ENCODE measurements at regions of chrX and their contacts with region 1.

Region 1: DNA sequence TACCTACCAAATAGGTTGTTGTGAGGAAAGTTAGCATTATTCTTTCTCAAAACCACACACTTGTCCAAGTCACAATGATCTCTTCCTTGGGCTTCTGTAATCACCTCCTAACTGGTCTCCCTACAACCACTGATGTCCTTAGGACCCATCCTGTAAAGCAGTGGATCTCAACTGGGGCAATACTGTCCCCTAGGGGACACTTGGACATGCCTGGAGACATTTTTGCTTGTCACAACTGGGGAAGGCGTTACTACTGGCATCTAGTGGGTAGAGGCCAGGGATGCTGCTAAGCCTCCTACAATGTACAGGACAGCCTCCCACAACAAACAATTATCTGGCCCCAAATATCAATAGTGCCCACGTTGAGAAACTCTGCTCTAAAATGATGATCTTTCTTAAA is 118.7 kb upstream of the AP1S2 start:
- DNase-seq: peak; percentile 59
- H3K4me3 Mint-ChIP-seq: no peak overlapping the region
- H3K27ac Mint-ChIP-seq: no peak overlapping the region
- H3K4me1 Mint-ChIP-seq: no peaks in the 10 kb centered on the region
- H3K27me3 Mint-ChIP-seq: no peaks in the 10 kb centered on the region
- CTCF ChIP-seq: peak; percentile 34

Region 2: DNA sequence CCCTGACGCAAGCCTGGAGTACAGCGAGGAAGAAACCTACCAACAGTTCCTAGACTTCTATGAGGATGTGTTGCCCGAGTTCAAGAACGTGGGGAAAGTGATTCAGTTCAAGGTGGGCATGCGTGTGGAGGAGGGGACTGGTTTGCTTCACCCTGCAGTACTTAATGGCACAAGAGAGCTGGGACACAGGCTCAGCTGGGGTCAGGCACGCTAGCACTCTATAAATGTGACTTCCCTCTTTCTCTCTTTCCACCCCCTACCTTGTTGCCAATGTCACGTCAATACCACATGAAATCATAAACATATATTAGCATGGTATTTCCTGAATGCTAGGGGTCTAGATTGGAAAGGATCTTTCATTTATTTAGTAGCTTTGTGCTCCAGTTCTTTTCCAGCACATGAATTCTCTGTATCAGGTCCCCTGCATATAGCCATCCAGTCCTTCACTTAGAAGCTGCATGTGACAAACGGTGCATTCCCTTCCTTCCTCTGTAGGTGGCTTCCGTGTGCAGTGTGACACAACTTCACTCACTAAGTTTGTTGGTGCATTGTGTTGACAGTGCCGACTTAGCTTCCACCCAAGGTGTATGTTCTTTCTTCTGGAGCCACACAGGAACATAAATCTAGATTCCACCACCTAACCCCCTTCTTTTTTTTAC is 157.4 kb before region 1 on chrX:
- CTCF ChIA-PET with region 1: no interaction called
- intact Hi-C with region 1: loop called (anchors 10 kb)
- DNase-seq: peak; percentile 31
- H3K4me3 Mint-ChIP-seq: no peak overlapping the region
- H3K27ac Mint-ChIP-seq: no peak overlapping the region
- H3K4me1 Mint-ChIP-seq: no peaks in the 10 kb centered on the region
- H3K27me3 Mint-ChIP-seq: no peaks in the 10 kb centered on the region
- CTCF ChIP-seq: peak; percentile 28

Region 3: DNA sequence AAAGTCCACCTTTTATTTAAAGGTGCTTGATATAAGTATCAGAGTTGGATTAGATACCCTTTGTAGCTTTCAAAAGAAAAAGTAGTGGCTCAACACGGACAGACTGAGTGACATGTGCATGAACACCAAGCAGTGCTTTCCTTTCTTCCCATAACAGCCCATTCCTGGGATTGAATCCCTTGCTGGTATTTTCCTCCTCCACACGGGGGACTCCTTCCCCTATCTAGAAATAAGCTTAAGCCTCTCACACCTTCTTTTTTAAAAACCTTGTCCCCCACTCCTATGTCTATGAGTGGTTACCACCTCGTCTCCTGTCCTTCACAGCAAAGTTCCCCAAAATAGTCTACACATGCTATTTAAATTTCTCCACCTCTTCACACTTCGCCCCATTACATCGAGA is 123.7 kb before region 1 on chrX:
- CTCF ChIA-PET with region 1: no interaction called
- intact Hi-C with region 1: loop called (anchors 2 kb)
- DNase-seq: peak; percentile 24
- H3K4me3 Mint-ChIP-seq: peak overlapping the region; percentile 7
- H3K27ac Mint-ChIP-seq: peak overlapping the region; percentile 36
- H3K4me1 Mint-ChIP-seq: peaks cover 33% of the 10 kb centered on the region
- H3K27me3 Mint-ChIP-seq: no peaks in the 10 kb centered on the region
- CTCF ChIP-seq: no peak